PC-3 (cell line): ENCODE measurements at regions of chr2 and their contacts with region 1.

Region 1: GRCh38 chr2:3805201-3805939 is 102.0 kb downstream of the DCDC2C start:
- DNase-seq: peak; percentile 70
- ATAC-seq: peak; percentile 85
- H3K4me3 ChIP-seq: no peak overlapping the region
- H3K27ac ChIP-seq: no peak overlapping the region
- H3K4me1 ChIP-seq: no peaks in the 10 kb centered on the region
- H3K27me3 ChIP-seq: peaks cover 10% of the 10 kb centered on the region; the same call in 1 of the 2 replicates
- CTCF ChIP-seq: peak; percentile 80

Region 2: DNA sequence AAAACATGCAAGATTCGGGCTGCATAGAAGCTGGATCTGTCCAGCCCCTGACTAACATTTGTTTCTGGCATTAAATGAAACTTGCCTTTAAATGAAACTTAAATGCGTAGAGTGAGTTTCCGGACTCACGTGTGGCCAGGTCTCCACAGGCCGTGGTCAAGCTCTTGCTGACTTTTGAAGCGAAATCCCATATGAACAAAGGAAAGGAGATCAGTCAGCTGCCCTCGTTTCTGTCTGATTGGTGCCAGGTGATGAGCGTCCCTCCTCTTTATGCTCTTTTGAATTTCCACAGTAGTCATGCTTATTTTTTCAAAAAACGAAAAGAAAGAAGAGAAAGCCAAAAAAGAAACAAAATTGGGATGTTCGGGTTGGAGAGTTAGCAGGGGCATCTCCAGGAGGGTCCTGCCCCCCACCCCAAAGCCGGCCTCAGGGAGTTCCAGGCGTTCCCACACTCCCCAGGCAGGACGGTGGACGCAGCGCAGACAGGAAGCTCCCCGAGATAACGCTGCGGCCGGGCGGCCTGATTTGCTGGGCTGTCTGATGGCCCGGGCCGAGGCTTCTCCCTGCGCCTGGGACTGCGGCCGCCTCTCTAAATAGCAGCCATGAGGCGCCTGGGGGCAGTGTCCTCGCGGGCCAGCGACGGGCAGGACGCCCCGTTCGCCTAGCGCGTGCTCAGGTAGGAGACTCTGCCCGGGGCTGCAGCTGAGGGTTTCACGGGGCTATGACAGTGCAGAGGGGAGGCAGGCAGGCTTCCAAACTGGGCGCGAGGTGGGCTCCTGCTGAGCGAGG is 210.7 kb before region 1 on chr2 and contains the start of gene COLEC11:
- CTCF ChIA-PET with region 1: no interaction called
- POLR2A ChIA-PET with region 1: no interaction called
- intact Hi-C with region 1: no loop called
- DNase-seq: no peak
- ATAC-seq: no peak
- H3K4me3 ChIP-seq: no peak within 1 kb of the TSS
- H3K27ac ChIP-seq: no peak within 1 kb of the TSS
- H3K4me1 ChIP-seq: no peaks in the 10 kb centered on the region
- H3K27me3 ChIP-seq: no peaks in the 10 kb centered on the region
- CTCF ChIP-seq: no peak
- total RNA-seq, gene COLEC11: 0.44 TPM in 1 of 2 replicates, not detected in the other

Region 3: DNA sequence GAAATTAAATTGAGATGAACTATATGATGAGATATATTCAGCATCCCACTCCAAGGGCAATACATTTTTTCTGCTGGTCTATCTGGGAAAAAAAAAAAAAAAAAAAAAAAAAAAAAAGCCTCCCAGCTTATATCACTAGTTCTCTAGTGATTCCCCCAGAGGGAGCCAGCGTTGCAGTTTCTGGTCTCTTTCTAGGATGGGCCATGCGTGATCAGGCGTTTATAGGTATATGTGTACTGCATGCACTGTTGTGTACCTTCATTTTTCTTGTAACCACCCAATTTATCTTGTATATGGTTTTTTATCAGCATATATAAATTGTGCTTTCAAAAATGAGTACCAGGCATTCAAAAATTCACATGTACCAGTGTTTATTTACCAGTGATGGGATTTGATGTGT is 66.9 kb before region 1 on chr2:
- CTCF ChIA-PET with region 1: interaction called, 13 read pairs
- POLR2A ChIA-PET with region 1: interaction called, 3 read pairs
- intact Hi-C with region 1: loop called (anchors 1 kb)
- DNase-seq: peak; percentile 66
- ATAC-seq: peak; percentile 80
- H3K4me3 ChIP-seq: no peak overlapping the region
- H3K27ac ChIP-seq: no peak overlapping the region
- H3K4me1 ChIP-seq: no peaks in the 10 kb centered on the region
- H3K27me3 ChIP-seq: peaks cover 45% of the 10 kb centered on the region
- CTCF ChIP-seq: peak; percentile 69